Left cardiac atrium (tissue), 4 donors: ENCODE measurements at regions of chr4 and their contacts with region 1.

Region 1: GRCh38 chr4:53015681-53016080 is 153.6 kb downstream of the RASL11B start:
- DNase-seq: no peak
- ATAC-seq: peak in 1 of 2 donors; percentile 35

Region 2: GRCh38 chr4:53119680-53120079 is 104.0 kb after region 1 on chr4:
- intact Hi-C with region 1: loop called in 1 of 2 experiments (anchors 10 kb)
- DNase-seq: no peak
- ATAC-seq: peak in 1 of 2 donors; percentile 63

Region 3: GRCh38 chr4:53377319-53378170 is 361.9 kb after region 1 on chr4 and contains the start of gene FIP1L1:
- intact Hi-C with region 1: loop called in 1 of 2 experiments (anchors 2 kb)
- DNase-seq: peak; percentile 96
- ATAC-seq: peak; percentile 100
- total RNA-seq, gene FIP1L1: 24.9 to 32.4 TPM

Region 4: DNA sequence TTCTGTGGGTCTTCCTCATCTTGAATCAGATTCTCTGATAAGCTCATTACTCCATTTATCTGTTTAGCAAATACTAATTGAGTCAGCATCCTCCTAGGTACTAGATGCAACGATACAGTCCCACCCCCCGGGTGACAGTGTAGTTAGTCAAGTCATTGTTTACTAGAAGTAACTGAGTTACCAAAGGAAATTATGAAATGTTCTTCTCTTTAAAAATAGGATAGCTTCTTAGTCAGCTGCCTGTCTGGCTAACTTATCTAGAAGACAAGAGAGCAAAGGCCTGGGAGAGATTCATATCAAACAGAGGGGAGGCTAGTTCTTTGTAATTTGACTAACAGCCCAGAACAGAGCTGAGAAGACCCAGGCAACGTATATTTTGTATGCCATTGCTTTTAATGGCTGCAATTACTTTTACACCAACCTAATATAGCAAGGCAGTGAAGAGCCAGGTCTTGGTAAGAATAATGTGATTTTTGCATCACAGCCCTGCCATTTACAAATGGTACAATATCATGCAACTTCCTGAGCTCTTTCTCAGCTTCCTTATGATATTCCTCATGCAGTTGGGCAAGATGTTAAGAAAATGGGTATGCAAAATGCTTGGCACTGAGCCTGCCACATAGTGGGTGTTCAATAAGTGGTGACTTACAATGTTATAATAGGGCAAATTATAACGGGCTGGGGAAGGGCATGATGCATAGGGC is 898.8 kb after region 1 on chr4:
- intact Hi-C with region 1: loop called in 1 of 2 experiments (anchors 10 kb)
- DNase-seq: peak; percentile 41
- ATAC-seq: peak in 1 of 2 donors; percentile 52

Region 5: DNA sequence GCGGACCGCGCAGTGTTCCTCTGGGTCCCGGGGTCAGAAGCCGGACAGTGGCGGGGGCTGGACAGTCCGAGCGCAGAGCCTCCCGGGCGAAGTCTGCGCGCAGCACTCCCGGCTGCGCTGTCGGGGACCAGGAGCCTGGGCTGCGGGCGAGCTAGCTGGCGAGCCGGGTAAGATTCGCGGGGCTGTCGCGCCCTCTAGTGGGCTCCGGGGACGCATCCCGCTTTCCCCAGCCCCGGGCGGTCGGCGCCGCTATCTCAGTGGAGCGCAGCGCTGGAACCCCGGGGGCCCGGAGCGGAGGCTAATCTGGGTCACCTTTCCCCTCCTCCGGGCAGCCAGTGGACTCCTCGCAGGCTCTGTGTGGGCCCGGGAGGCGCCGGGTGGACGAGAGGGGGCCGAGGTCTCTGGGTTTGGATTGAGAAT is 1217.6 kb after region 1 on chr4:
- intact Hi-C with region 1: loop called (anchors 5 to 10 kb)
- DNase-seq: peak; percentile 89
- ATAC-seq: peak; percentile 85 to 88